ENCODE measurements at regions of chr1 and their contacts with region 1.

Region 1: DNA sequence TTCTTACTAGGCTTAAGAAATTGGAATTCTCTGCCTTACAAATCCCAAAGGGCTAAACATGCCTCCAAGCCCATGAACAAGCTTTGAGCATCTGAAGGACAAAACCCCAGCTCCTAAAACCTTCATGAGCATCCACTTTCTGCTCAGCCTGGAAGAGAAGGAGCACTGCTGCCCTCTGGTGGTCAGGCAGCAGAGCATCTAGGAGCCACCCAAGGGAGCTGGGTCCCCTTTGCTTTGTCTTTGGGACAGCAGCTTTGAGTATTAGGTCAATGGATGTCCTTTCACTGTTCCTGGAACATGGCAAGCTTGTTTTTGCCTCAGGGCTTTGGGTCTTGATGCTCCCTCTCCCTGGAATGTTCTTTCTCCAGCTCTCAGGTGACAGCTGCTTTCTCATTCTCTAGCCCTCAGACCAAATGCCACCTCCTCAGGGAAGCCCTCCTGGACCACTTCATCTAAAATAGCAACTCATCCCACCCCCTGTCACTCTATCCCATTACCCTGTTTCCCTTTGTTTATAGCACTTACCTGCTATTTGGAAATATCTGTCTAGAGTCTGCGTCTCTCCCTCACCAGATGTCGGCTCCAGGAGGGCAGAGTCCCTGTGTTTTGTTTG is 25.7 kb downstream of the RAB7B start:
- DNase-seq: peak; percentile 76
- ATAC-seq: peak; percentile 88

Region 2: DNA sequence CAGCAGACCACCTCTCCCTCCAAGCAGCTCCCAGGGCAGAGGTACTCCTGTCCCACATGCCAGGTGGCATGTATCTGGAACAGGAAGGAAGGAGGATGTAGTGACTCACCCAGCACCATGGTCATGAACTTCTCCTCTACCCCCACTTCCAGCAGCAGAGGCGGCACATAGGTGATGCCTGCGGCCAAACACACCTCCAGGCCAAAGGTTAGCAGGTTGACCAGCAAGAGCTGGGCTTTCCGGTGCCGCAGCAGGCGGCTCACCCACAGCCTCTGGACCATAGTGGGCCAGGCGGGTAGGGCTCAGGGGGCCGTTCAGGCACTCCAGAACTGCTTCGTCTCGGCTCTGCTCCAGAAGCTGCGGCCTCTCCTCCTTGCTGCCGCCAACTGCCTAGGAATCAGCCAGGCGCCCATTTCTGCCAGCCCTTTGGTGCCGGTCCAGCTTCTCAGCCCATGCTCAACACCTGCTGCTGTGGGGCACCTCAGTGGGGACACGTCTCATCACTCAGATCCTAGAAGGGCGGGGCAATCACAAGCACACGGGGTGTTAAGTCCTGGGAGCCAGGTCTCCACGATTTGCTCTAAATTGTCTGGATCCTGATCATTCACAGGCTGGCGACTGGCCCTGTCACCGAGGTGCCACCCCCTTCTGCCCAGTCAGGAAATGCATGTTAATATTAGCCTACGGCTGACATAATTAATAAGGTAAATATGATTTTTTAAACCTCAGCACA is 313.0 kb before region 1 on chr1:
- intact Hi-C with region 1: loop called (anchors 5 kb)
- DNase-seq: no peak
- ATAC-seq: no peak

Region 3: GRCh38 chr1:205791568-205792180 is 185.8 kb before region 1 on chr1:
- intact Hi-C with region 1: loop called (anchors 5 kb)
- DNase-seq: peak; percentile 64
- ATAC-seq: peak; percentile 59

Region 4: GRCh38 chr1:205812878-205813754 is 164.4 kb before region 1 on chr1 and contains the start of gene SLC41A1:
- intact Hi-C with region 1: loop called (anchors 5 kb)
- DNase-seq: peak; percentile 94
- ATAC-seq: peak; percentile 92
- total RNA-seq, gene SLC41A1: 465 TPM

Region 5: GRCh38 chr1:205919026-205919746 is 58.3 kb before region 1 on chr1:
- intact Hi-C with region 1: loop called (anchors 1 kb)
- DNase-seq: peak; percentile 88
- ATAC-seq: peak; percentile 65

Measured in Right ventricle myocardium superior (tissue), 1 donor.